Endothelial cell of umbilical vein (primary cell): ENCODE measurements at regions of chr19 and their contacts with region 1.

Region 1: DNA sequence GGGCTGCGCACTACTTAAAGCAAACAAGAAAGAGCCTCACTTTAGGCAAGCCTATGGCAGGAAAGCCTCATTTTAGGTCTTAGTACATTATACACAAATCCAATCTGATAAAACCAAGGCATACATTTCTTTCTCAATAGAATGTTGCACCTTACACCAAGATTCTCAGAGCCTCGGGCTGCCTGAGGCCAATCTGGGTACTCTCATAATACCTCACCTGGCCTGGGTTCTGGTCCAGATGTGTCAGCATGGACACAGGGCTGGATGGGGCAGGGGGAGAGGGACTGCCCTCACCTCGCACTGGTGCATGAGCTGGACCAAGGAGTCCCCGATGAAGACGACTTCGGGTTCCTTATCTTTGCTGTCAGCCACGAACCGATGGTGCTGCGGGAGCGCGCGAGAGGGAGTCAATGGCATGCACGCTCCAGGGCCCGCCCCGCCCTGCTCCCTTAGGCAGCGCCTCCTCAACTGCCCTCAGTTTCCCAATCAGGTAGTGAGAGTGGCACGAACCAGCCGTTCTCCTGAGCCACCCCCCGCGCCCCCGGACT is at the start of gene PRR19:
- DNase-seq: no peak
- H3K4me3 ChIP-seq: peak within 1 kb of the TSS; percentile 44 to 70 (median 54)
- H3K27ac ChIP-seq: no peak within 1 kb of the TSS
- H3K4me1 ChIP-seq: peaks cover 9% of the 10 kb centered on the region
- H3K27me3 ChIP-seq: no peaks in the 10 kb centered on the region
- CTCF ChIP-seq: no peak
- POLR2A ChIP-seq: no peak
- total RNA-seq, gene PRR19: 1.0 and 1.5 TPM in 2 replicates

Region 2: GRCh38 chr19:42219812-42220750 is 81.6 kb before region 1 on chr19 and contains the start of gene ZNF526:
- CTCF ChIA-PET with region 1: interaction called, 4 read pairs
- POLR2A ChIA-PET with region 1: no interaction called
- dilution Hi-C with region 1: no loop called
- intact Hi-C with region 1: loop called (anchors 1 kb)
- DNase-seq: peak; percentile 99
- H3K4me3 ChIP-seq: peak within 1 kb of the TSS; percentile 63 to 90 (median 83)
- H3K27ac ChIP-seq: peak within 1 kb of the TSS; percentile 54
- H3K4me1 ChIP-seq: peaks cover 24% of the 10 kb centered on the region
- H3K27me3 ChIP-seq: no peaks in the 10 kb centered on the region
- CTCF ChIP-seq: no peak
- POLR2A ChIP-seq: peak; percentile 74
- total RNA-seq, gene ZNF526: 13.3 and 13.4 TPM in 2 replicates